CD8-positive, alpha-beta memory T cell (primary cell): ENCODE measurements at regions of chr14 and their contacts with region 1.

Region 1: DNA sequence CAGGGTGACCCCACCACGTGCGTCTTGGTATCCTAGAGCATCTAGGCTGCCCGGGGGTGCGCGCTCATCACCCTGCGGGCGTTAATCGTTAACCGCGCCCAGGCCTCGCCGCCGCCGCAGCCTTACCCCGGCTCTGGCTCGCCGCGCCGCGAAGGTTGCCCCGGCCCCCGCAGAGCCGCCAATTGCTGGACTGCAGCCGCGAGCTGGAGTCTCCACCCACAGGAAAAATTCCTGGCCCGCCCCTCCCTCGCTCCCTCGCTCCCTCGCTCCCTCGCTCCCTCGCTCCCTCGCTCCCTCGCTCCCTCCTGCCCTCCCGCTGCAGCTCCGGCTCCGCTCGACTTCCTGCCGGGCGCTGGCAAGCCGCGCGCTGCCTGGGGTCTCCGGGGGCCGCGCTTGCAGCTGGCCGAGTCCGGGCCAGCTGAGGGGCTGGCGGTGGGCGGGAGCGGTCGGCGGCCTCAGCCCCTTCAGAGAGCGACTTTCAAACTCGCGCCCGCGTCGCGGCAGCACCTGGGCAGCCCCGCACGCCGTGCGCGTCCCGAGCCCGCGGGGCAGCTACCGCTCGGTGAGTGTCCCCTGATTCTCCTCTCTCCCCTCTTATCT is at the start of gene PLEKHG3:
- DNase-seq: peak in 3 of 5 donors; percentile 44 to 57 (median 46)
- H3K4me3 ChIP-seq: peak within 1 kb of the TSS; percentile 56
- H3K4me3 Mint-ChIP-seq: peak within 1 kb of the TSS; percentile 83 to 94 (median 88)
- H3K27ac ChIP-seq: peak within 1 kb of the TSS; percentile 43
- H3K27ac Mint-ChIP-seq: peak within 1 kb of the TSS; percentile 47 to 98 (median 89)
- H3K4me1 ChIP-seq: peaks cover 59% of the 10 kb centered on the region
- H3K4me1 Mint-ChIP-seq: peaks cover 52 to 62% (median 60%) of the 10 kb centered on the region in 3 donors
- H3K27me3 ChIP-seq: peaks cover 23% of the 10 kb centered on the region
- H3K27me3 Mint-ChIP-seq: peaks cover 28 to 61% of the 10 kb centered on the region in 2 donors
- total RNA-seq, gene PLEKHG3: 4.9 to 5.0 TPM

Region 2: GRCh38 chr14:64656986-64657385 is 47.3 kb before region 1 on chr14:
- CTCF ChIA-PET with region 1: no interaction called
- POLR2A ChIA-PET with region 1: no interaction called
- DNase-seq: no peak
- H3K4me3 ChIP-seq: no peak overlapping the region
- H3K4me3 Mint-ChIP-seq: peak overlapping the region in 1 of 7 donors; percentile 12
- H3K27ac ChIP-seq: no peak overlapping the region
- H3K27ac Mint-ChIP-seq: peak overlapping the region in 1 of 8 donors; percentile 59
- H3K4me1 ChIP-seq: no peaks in the 10 kb centered on the region
- H3K4me1 Mint-ChIP-seq: peaks cover 9 to 11% (median 10%) of the 10 kb centered on the region in 3 donors
- H3K27me3 ChIP-seq: no peaks in the 10 kb centered on the region
- H3K27me3 Mint-ChIP-seq: peaks cover 9 to 20% of the 10 kb centered on the region in 2 donors

Region 3: GRCh38 chr14:64723691-64724577 is 19.7 kb after region 1 on chr14:
- CTCF ChIA-PET with region 1: interaction called, 10 read pairs
- POLR2A ChIA-PET with region 1: interaction called, 6 read pairs
- DNase-seq: peak in 2 of 5 donors; percentile 35
- H3K4me3 ChIP-seq: peak overlapping the region; percentile 49
- H3K4me3 Mint-ChIP-seq: peak overlapping the region; percentile 61 to 88 (median 73)
- H3K27ac ChIP-seq: peak overlapping the region; percentile 29
- H3K27ac Mint-ChIP-seq: peak overlapping the region; percentile 83 to 99 (median 92)
- H3K4me1 ChIP-seq: peaks cover 88% of the 10 kb centered on the region
- H3K4me1 Mint-ChIP-seq: peaks cover 89 to 98% (median 98%) of the 10 kb centered on the region in 3 donors
- H3K27me3 ChIP-seq: no peaks in the 10 kb centered on the region
- H3K27me3 Mint-ChIP-seq: no peaks in the 10 kb centered on the region